Panc1 (cell line): ENCODE measurements at regions of chr5 and their contacts with region 1.

Region 1: GRCh38 chr5:14153932-14154731 is 11.0 kb downstream of the TRIO start:
- DNase-seq: no peak
- ATAC-seq: peak; percentile 66
- H3K4me3 ChIP-seq: peak overlapping the region; percentile 16 to 38
- H3K27ac ChIP-seq: peak overlapping the region; percentile 99
- H3K4me1 ChIP-seq: peaks cover 100% of the 10 kb centered on the region
- H3K27me3 ChIP-seq: no peaks in the 10 kb centered on the region
- CTCF ChIP-seq: no peak

Region 2: DNA sequence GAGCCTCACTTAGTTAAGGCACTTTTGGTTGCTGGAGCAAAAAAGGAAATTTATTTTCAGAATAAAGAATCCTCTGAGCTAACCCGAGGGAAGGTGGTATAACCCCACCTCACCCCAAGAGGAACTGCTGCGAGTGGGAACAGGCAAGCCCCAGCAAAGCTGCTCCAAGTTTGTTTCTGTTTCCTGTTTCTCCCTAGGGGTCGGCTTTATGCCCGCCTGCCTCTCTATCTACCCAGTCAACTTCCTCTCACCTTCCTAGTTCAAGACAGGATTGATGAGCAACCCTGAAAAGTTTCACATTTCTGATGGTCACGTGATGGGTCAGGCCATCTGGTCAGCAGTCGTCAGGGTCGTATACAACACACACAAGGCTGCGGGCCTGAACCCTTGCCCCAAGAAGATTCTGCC is 20.1 kb after region 1 on chr5:
- CTCF ChIA-PET with region 1: interaction called, 9 read pairs
- POLR2A ChIA-PET with region 1: interaction called, 14 read pairs
- in situ Hi-C with region 1: no loop called
- intact Hi-C with region 1: no loop called
- DNase-seq: no peak
- ATAC-seq: peak; percentile 31
- H3K4me3 ChIP-seq: peak overlapping the region; percentile 19 to 43
- H3K27ac ChIP-seq: peak overlapping the region; percentile 99
- H3K4me1 ChIP-seq: peaks cover 93% of the 10 kb centered on the region
- H3K27me3 ChIP-seq: no peaks in the 10 kb centered on the region
- CTCF ChIP-seq: no peak

Region 3: DNA sequence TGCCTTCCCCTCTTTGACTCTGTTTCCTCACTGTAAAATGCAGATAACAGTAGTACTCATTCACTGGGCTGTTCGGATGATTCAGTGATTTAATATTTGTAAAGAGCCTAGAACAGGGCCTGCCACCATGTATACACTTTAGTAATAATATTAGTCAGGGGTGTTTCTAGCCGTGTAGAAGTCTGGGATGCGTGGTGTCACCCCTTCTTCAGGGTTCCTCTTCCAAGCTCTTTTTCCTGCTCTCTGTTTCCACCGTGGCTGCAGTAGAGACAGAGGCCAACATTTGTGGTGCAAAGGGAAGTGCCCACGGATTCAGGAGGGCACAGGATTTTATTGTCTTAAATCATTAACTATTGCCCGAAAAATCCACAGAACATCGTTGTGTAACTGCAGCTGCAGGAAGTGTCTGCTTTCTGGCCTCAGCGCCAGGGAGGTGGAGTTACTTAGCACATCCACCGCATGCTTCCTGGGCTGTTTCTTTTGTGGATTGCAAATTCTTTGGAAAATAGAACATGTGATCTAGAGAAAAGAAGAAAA is 50.7 kb after region 1 on chr5:
- CTCF ChIA-PET with region 1: interaction called, 3 read pairs
- POLR2A ChIA-PET with region 1: interaction called, 3 read pairs
- in situ Hi-C with region 1: no loop called
- intact Hi-C with region 1: loop called (anchors 5 kb)
- DNase-seq: no peak
- ATAC-seq: peak; percentile 9
- H3K4me3 ChIP-seq: peak overlapping the region; percentile 7 to 40; a peak in 3 of 4 replicates
- H3K27ac ChIP-seq: peak overlapping the region; percentile 99
- H3K4me1 ChIP-seq: peaks cover 95% of the 10 kb centered on the region
- H3K27me3 ChIP-seq: no peaks in the 10 kb centered on the region
- CTCF ChIP-seq: no peak

Region 4: DNA sequence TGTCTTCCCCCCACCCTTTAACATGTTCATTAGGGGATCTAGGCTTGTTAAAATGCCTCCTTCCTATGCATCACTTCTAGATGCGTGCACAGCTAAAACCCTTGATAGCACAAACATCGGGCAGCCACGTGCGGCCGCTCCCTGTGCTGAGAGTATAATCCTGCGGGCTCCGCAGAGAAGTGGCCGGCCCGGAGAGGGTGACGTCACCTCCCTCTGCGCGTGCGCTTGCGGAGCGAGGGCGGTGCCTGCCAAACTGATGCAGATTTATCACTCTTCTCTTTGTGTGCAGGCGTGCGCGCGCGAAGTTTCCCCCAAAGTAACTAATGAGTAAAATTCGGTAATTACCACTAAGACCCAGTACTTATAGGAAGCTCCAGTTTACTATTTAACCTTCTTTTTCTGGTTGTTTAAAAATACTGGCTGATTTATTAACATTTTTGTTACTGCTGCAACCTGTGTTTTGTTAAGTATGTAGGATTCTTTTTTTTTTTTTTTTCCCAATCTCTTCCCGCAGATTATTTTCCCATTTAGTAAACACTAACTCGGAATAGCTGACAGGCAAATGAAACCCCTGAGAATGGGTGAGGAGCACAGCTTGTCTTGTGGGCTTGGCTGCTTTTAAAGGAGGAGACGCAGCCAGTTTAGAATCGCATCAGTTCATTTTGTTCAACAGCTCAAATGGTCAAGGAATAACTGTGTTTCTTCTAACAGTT is 110.6 kb after region 1 on chr5:
- CTCF ChIA-PET with region 1: no interaction called
- POLR2A ChIA-PET with region 1: no interaction called
- in situ Hi-C with region 1: no loop called
- intact Hi-C with region 1: loop called (anchors 5 kb)
- DNase-seq: peak; percentile 89
- ATAC-seq: peak; percentile 68
- H3K4me3 ChIP-seq: peak overlapping the region; percentile 24 to 44
- H3K27ac ChIP-seq: peak overlapping the region; percentile 96
- H3K4me1 ChIP-seq: peaks cover 99% of the 10 kb centered on the region
- H3K27me3 ChIP-seq: no peaks in the 10 kb centered on the region
- CTCF ChIP-seq: no peak

Region 5: GRCh38 chr5:14326035-14326903 is 172.1 kb after region 1 on chr5:
- CTCF ChIA-PET with region 1: no interaction called
- POLR2A ChIA-PET with region 1: no interaction called
- in situ Hi-C with region 1: no loop called
- intact Hi-C with region 1: no loop called
- DNase-seq: no peak
- ATAC-seq: peak; percentile 66
- H3K4me3 ChIP-seq: no peak overlapping the region
- H3K27ac ChIP-seq: no peak overlapping the region
- H3K4me1 ChIP-seq: peaks cover 16% of the 10 kb centered on the region
- H3K27me3 ChIP-seq: no peaks in the 10 kb centered on the region
- CTCF ChIP-seq: peak; percentile 72